ENCODE measurements at regions of chr10 and their contacts with region 1.

Region 1: GRCh38 chr10:58952747-58953466 is 223.5 kb upstream of the PHYHIPL start:
- DNase-seq: peak; percentile 36
- H3K4me3 ChIP-seq: no peak overlapping the region; a peak in 1 of 4 replicates
- H3K27ac ChIP-seq: no peak overlapping the region
- H3K4me1 ChIP-seq: peaks cover 6 to 7% of the 10 kb centered on the region in 2 experiments
- H3K27me3 ChIP-seq: no peaks in the 10 kb centered on the region
- CTCF ChIP-seq: peak; percentile 87
- EP300 ChIP-seq: 0 out of 4 replicates have a peak, but pooled peaks of 1 of the 2 experiments have one; percentile 6
- RAD21 ChIP-seq: peak; percentile 95

Region 2: DNA sequence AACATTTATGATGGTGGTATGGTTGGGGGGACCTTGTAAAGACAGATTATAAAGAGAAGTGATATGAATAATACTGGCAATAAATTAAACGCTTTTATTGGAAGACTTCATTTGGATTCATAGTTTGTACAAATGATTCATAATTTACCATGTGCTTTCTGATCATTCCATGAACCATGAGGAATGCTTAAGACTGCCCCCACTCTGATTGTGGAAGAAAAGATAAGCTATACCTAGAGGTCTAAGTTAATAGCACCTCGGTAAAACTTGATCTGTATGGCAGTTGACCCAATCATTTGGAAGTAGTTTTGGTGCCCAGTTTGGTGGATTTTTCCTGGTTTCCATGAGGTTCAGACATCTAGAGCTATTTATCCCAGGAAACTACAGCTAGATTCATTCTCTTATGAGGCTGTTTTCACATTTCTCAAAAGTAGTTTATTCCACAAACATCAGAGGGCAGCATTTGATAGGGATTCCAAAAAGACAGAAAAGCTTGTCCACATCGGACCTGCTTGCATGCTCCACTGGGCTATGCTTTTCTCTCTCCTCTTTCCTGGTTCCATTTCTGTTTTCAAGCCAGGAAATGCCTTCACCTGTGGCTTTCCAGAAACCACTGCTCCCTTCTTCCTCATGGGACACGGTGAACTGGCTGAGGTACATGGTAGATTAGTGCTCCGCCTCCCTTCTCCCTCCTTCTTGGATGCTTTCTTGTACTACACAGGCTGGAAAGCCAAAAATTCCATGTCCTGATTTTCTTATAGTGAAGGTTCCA is 538.5 kb before region 1 on chr10:
- CTCF ChIA-PET with region 1: interaction called, 10 read pairs
- POLR2A ChIA-PET with region 1: no interaction called
- DNase-seq: peak; percentile 54
- H3K4me3 ChIP-seq: no peak overlapping the region
- H3K27ac ChIP-seq: no peak overlapping the region
- H3K4me1 ChIP-seq: no peaks in the 10 kb centered on the region
- H3K27me3 ChIP-seq: no peaks in the 10 kb centered on the region
- CTCF ChIP-seq: peak; percentile 70
- EP300 ChIP-seq: no peak
- RAD21 ChIP-seq: peak; percentile 94

Region 3: GRCh38 chr10:58919927-58920654 is 32.8 kb before region 1 on chr10:
- CTCF ChIA-PET with region 1: no interaction called
- POLR2A ChIA-PET with region 1: no interaction called
- DNase-seq: no peak
- H3K4me3 ChIP-seq: peak overlapping the region in 1 of 2 experiments; percentile 7; a peak in 1 of 4 replicates
- H3K27ac ChIP-seq: peak overlapping the region; percentile 58 to 86; a peak in 3 of 4 replicates
- H3K4me1 ChIP-seq: peaks cover 4 to 18% of the 10 kb centered on the region in 2 experiments; a peak in 2 of 4 replicates
- H3K27me3 ChIP-seq: no peaks in the 10 kb centered on the region
- CTCF ChIP-seq: no peak
- EP300 ChIP-seq: peak in 1 of 2 experiments; percentile 32; a peak in 1 of 4 replicates
- RAD21 ChIP-seq: no peak

Region 4: DNA sequence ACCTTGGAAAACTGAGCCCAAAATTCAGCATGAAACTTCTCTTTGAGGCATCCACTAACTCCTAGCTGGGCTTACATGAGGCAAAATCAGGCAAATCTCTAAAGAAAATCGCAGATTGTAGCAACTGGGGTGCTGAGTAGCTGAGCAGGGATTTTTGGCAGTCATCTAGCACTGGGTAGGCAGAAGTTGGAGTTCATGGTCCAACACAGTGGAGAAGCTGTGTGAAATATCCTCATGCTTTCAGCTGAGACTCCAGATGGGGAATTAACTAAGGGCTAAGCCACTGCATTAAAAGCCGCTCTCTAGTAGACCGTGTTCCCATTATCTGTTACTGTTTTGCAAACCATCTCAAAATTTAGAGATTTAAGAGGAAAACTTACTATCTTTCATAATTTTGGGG is 16.5 kb before region 1 on chr10:
- CTCF ChIA-PET with region 1: interaction called, 18 read pairs
- POLR2A ChIA-PET with region 1: no interaction called
- DNase-seq: no peak
- H3K4me3 ChIP-seq: no peak overlapping the region
- H3K27ac ChIP-seq: no peak overlapping the region
- H3K4me1 ChIP-seq: no peaks in the 10 kb centered on the region
- H3K27me3 ChIP-seq: no peaks in the 10 kb centered on the region
- CTCF ChIP-seq: no peak
- EP300 ChIP-seq: no peak
- RAD21 ChIP-seq: no peak

Region 5: GRCh38 chr10:58967551-58968388 is 14.9 kb after region 1 on chr10:
- CTCF ChIA-PET with region 1: interaction called, 34 read pairs
- POLR2A ChIA-PET with region 1: no interaction called
- DNase-seq: peak; percentile 58
- H3K4me3 ChIP-seq: no peak overlapping the region
- H3K27ac ChIP-seq: peak overlapping the region in 1 of 2 experiments; percentile 62; a peak in 2 of 4 replicates
- H3K4me1 ChIP-seq: peaks cover 0 to 34% of the 10 kb centered on the region in 2 experiments; a peak in 2 of 4 replicates
- H3K27me3 ChIP-seq: no peaks in the 10 kb centered on the region; the same call in 1 of the 2 replicates
- CTCF ChIP-seq: no peak
- EP300 ChIP-seq: no peak
- RAD21 ChIP-seq: peak; percentile 20; the same call in 1 of the 2 replicates

Region 6: DNA sequence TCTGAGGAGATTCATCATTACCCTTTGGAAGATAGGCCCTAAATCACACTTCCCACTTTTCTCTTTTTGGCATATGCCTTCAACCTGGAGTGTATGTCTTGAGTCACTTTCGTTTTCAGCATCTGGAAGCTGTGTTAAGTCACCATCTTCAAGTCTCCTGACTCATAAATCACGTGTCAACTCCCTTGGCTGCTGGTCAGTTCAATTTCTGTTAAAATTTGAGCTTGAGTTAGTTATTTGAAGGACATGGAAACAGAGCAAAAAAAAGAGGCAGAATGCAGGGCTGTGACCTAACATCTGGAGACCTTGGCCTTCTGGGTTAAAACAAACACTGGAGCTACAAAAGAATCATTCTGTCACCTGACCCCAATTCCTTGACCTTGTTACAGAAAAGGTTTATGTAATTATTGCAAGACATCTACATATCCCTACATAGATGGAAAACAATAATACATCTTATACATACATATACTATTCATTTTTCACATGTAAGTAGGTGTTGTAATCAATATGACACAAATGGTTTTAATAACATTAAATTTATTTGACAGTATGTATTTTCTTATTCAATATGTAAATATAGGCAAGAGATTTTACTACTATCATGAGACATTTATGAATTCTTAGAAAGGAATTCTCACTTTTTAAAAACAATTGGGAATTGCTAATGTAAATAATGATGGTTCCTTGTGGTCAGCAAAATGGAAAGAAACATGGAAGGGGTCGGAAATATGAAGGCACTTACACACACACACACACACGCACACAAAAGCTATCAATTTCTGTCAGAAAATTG is 53.8 kb after region 1 on chr10:
- CTCF ChIA-PET with region 1: no interaction called
- POLR2A ChIA-PET with region 1: no interaction called
- DNase-seq: no peak
- H3K4me3 ChIP-seq: no peak overlapping the region
- H3K27ac ChIP-seq: no peak overlapping the region
- H3K4me1 ChIP-seq: peaks cover 0 to 3% of the 10 kb centered on the region in 2 experiments; a peak in 1 of 4 replicates
- H3K27me3 ChIP-seq: 0 out of 2 replicates have a peak, but pooled peaks cover 4% of the 10 kb centered on the region
- CTCF ChIP-seq: no peak
- EP300 ChIP-seq: no peak
- RAD21 ChIP-seq: no peak

Region 7: DNA sequence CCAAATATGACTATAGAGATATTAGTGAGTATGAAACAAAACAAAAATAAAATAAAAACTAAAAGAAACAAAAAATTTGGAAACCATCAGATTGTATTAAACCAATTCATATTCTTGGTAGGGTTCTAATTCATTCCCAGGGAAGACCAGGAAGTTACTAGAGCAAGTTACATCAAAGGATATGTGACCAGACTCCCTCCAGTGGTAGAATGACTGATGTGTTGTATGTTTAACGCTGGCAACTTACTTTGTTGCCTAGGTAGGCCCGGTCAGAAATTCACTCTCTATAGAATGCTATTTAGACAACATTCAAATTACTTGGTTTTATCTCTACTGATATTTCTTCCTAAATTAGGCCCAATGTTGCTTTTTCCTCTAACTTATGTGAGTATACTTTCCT is 228.8 kb after region 1 on chr10:
- CTCF ChIA-PET with region 1: interaction called, 24 read pairs
- POLR2A ChIA-PET with region 1: no interaction called
- DNase-seq: peak; percentile 70
- H3K4me3 ChIP-seq: no peak overlapping the region
- H3K27ac ChIP-seq: peak overlapping the region in 1 of 2 experiments; percentile 86; a peak in 2 of 4 replicates
- H3K4me1 ChIP-seq: peaks cover 0 to 8% of the 10 kb centered on the region in 2 experiments; a peak in 1 of 4 replicates
- H3K27me3 ChIP-seq: peaks cover 6% of the 10 kb centered on the region
- CTCF ChIP-seq: peak; percentile 71
- EP300 ChIP-seq: no peak
- RAD21 ChIP-seq: peak; percentile 81

Region 8: GRCh38 chr10:59234816-59235429 is 282.0 kb after region 1 on chr10:
- CTCF ChIA-PET with region 1: interaction called, 21 read pairs
- POLR2A ChIA-PET with region 1: no interaction called
- DNase-seq: no peak
- H3K4me3 ChIP-seq: no peak overlapping the region
- H3K27ac ChIP-seq: no peak overlapping the region
- H3K4me1 ChIP-seq: peaks cover 0 to 5% of the 10 kb centered on the region in 2 experiments; a peak in 2 of 4 replicates
- H3K27me3 ChIP-seq: no peaks in the 10 kb centered on the region
- CTCF ChIP-seq: peak; percentile 82
- EP300 ChIP-seq: no peak
- RAD21 ChIP-seq: peak; percentile 62

Region 9: DNA sequence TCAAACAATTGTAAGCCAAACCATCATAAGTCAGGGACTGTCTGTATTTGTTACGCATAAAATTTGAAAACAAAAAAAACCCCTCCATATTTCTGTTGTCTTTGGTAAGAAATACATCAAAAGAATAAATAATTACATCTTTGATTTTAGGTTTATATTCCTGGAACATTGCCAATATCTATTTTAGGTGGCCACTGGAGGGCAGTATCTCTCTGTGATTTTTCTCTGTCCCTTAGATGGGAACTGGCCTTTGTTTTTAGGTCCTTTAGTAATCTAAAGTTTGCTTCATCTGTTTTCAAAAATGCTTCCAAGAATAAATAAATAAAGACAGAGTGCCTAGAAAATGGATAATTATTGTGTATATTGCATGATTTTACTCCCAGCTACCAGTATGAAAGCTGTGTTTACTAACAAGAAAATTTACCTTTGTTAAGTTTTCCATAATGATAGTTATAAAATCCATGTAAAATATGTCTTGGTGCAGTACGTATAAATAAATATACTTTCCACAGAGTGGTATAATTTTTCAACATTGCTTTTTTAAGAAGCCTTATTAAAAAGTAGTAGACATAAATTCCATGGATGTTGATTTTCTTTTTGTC is 287.8 kb after region 1 on chr10:
- CTCF ChIA-PET with region 1: interaction called, 21 read pairs
- POLR2A ChIA-PET with region 1: no interaction called
- DNase-seq: peak; percentile 23
- H3K4me3 ChIP-seq: no peak overlapping the region
- H3K27ac ChIP-seq: no peak overlapping the region; a peak in 1 of 4 replicates
- H3K4me1 ChIP-seq: no peaks in the 10 kb centered on the region; a peak in 1 of 4 replicates
- H3K27me3 ChIP-seq: no peaks in the 10 kb centered on the region
- CTCF ChIP-seq: peak; percentile 77
- EP300 ChIP-seq: no peak
- RAD21 ChIP-seq: peak; percentile 83

Measured in SK-N-SH (cell line).